Caco-2 (cell line): ENCODE measurements at regions of chr14 and their contacts with region 1.

Region 1: GRCh38 chr14:68862954-68863594 is 70.2 kb upstream of the ZFP36L1 start:
- DNase-seq: peak; percentile 87 to 89
- H3K4me3 ChIP-seq: no peak overlapping the region
- H3K4me3 Mint-ChIP-seq: no peak overlapping the region
- H3K27ac Mint-ChIP-seq: no peak overlapping the region
- H3K4me1 ChIP-seq: peaks cover 14% of the 10 kb centered on the region
- H3K4me1 Mint-ChIP-seq: peaks cover 6% of the 10 kb centered on the region
- H3K27me3 ChIP-seq: no peaks in the 10 kb centered on the region
- H3K27me3 Mint-ChIP-seq: no peaks in the 10 kb centered on the region
- CTCF ChIP-seq: peak; percentile 82 to 83

Region 2: GRCh38 chr14:68495101-68496039 is 367.7 kb before region 1 on chr14:
- CTCF ChIA-PET with region 1: no interaction called
- POLR2A ChIA-PET with region 1: no interaction called
- intact Hi-C with region 1: no loop called
- DNase-seq: no peak
- H3K4me3 ChIP-seq: no peak overlapping the region
- H3K4me3 Mint-ChIP-seq: no peak overlapping the region
- H3K27ac Mint-ChIP-seq: no peak overlapping the region
- H3K4me1 ChIP-seq: no peaks in the 10 kb centered on the region
- H3K4me1 Mint-ChIP-seq: peaks cover 7% of the 10 kb centered on the region
- H3K27me3 ChIP-seq: no peaks in the 10 kb centered on the region
- H3K27me3 Mint-ChIP-seq: no peaks in the 10 kb centered on the region
- CTCF ChIP-seq: no peak

Region 3: GRCh38 chr14:68896132-68896531 is 33.1 kb after region 1 on chr14:
- CTCF ChIA-PET with region 1: no interaction called
- POLR2A ChIA-PET with region 1: no interaction called
- intact Hi-C with region 1: no loop called
- DNase-seq: no peak
- H3K4me3 ChIP-seq: no peak overlapping the region
- H3K4me3 Mint-ChIP-seq: no peak overlapping the region
- H3K27ac Mint-ChIP-seq: no peak overlapping the region
- H3K4me1 ChIP-seq: no peaks in the 10 kb centered on the region
- H3K4me1 Mint-ChIP-seq: no peaks in the 10 kb centered on the region
- H3K27me3 ChIP-seq: no peaks in the 10 kb centered on the region
- H3K27me3 Mint-ChIP-seq: no peaks in the 10 kb centered on the region
- CTCF ChIP-seq: peak; percentile 33 to 41

Region 4: GRCh38 chr14:68911594-68912227 is 48.6 kb after region 1 on chr14:
- CTCF ChIA-PET with region 1: interaction called, 4 read pairs
- POLR2A ChIA-PET with region 1: no interaction called
- intact Hi-C with region 1: loop called (anchors 1 kb)
- DNase-seq: peak; percentile 80 to 85
- H3K4me3 ChIP-seq: no peak overlapping the region
- H3K4me3 Mint-ChIP-seq: no peak overlapping the region
- H3K27ac Mint-ChIP-seq: no peak overlapping the region
- H3K4me1 ChIP-seq: no peaks in the 10 kb centered on the region
- H3K4me1 Mint-ChIP-seq: no peaks in the 10 kb centered on the region
- H3K27me3 ChIP-seq: no peaks in the 10 kb centered on the region
- H3K27me3 Mint-ChIP-seq: no peaks in the 10 kb centered on the region
- CTCF ChIP-seq: peak; percentile 97 to 98

Region 5: DNA sequence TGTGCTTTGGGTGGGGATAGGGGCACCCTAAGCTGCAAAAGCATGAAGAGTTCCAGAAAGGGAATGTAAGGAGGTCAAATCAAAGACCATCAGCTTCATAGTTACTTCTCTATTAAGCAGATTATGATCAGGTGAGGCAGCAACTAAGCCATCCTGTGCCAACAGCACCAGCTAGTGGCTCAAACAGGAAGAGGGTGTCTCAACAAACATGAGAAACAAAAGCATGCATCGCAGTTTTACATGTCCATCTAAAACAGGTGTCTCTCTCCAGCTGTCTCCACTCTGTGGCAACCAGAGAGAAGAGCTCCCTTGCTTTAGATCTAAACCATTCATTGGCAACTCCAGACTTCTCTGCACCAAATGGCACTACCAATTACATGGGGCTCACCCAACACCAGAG is 63.2 kb after region 1 on chr14:
- CTCF ChIA-PET with region 1: no interaction called
- POLR2A ChIA-PET with region 1: no interaction called
- intact Hi-C with region 1: no loop called
- DNase-seq: no peak
- H3K4me3 ChIP-seq: no peak overlapping the region
- H3K4me3 Mint-ChIP-seq: no peak overlapping the region
- H3K27ac Mint-ChIP-seq: peak overlapping the region; percentile 48
- H3K4me1 ChIP-seq: peaks cover 18% of the 10 kb centered on the region
- H3K4me1 Mint-ChIP-seq: peaks cover 26% of the 10 kb centered on the region
- H3K27me3 ChIP-seq: no peaks in the 10 kb centered on the region
- H3K27me3 Mint-ChIP-seq: no peaks in the 10 kb centered on the region
- CTCF ChIP-seq: peak; percentile 23 to 24

Region 6: GRCh38 chr14:69002069-69002468 is 139.0 kb after region 1 on chr14:
- CTCF ChIA-PET with region 1: interaction called, 4 read pairs
- POLR2A ChIA-PET with region 1: no interaction called
- intact Hi-C with region 1: loop called (anchors 1 kb)
- DNase-seq: peak; percentile 69 to 75
- H3K4me3 ChIP-seq: no peak overlapping the region
- H3K4me3 Mint-ChIP-seq: no peak overlapping the region
- H3K27ac Mint-ChIP-seq: no peak overlapping the region
- H3K4me1 ChIP-seq: peaks cover 6% of the 10 kb centered on the region; the same call in 1 of the 2 replicates
- H3K4me1 Mint-ChIP-seq: peaks cover 11% of the 10 kb centered on the region
- H3K27me3 ChIP-seq: no peaks in the 10 kb centered on the region
- H3K27me3 Mint-ChIP-seq: no peaks in the 10 kb centered on the region
- CTCF ChIP-seq: peak in 1 of 2 experiments; percentile 52

Region 7: GRCh38 chr14:69090187-69090789 is 227.2 kb after region 1 on chr14:
- CTCF ChIA-PET with region 1: interaction called, 9 read pairs
- POLR2A ChIA-PET with region 1: no interaction called
- intact Hi-C with region 1: loop called (anchors 1 kb)
- DNase-seq: peak; percentile 51 to 58
- H3K4me3 ChIP-seq: no peak overlapping the region
- H3K4me3 Mint-ChIP-seq: no peak overlapping the region
- H3K27ac Mint-ChIP-seq: no peak overlapping the region
- H3K4me1 ChIP-seq: peaks cover 37% of the 10 kb centered on the region
- H3K4me1 Mint-ChIP-seq: peaks cover 26% of the 10 kb centered on the region
- H3K27me3 ChIP-seq: no peaks in the 10 kb centered on the region; the same call in 1 of the 2 replicates
- H3K27me3 Mint-ChIP-seq: no peaks in the 10 kb centered on the region
- CTCF ChIP-seq: peak; percentile 47 to 77

Region 8: DNA sequence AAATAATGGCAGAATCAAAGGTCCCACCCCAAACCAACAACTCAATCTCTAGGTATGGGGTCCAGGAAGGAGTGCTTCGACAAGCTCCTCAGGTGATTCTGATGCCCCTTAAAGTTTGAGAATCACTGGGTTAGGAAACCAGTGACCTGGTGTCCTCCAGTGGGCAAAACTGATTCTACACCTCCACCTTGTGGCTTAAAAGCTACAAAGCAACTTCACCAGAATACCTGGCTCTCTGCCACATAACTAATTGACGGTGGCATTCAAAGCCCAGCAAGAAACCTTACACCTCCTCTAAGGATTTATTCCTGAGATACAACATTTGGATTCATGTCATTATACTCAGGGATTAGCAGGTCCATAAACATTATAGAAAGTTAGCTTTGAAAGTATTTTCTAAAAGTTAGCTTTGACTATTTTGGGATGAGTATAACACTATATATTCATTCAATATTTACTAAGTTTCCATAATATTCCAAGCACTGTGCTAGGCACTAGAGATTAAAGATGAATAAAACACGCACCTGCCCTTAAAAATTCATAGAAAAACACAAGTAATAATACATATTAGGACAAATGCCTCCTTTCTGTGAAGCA is 244.4 kb after region 1 on chr14:
- CTCF ChIA-PET with region 1: interaction called, 16 read pairs
- POLR2A ChIA-PET with region 1: no interaction called
- intact Hi-C with region 1: loop called (anchors 1 kb)
- DNase-seq: peak; percentile 50 to 68
- H3K4me3 ChIP-seq: no peak overlapping the region
- H3K4me3 Mint-ChIP-seq: no peak overlapping the region
- H3K27ac Mint-ChIP-seq: no peak overlapping the region
- H3K4me1 ChIP-seq: no peaks in the 10 kb centered on the region
- H3K4me1 Mint-ChIP-seq: no peaks in the 10 kb centered on the region
- H3K27me3 ChIP-seq: no peaks in the 10 kb centered on the region
- H3K27me3 Mint-ChIP-seq: no peaks in the 10 kb centered on the region
- CTCF ChIP-seq: peak; percentile 64 to 74